Naive thymus-derived CD4-positive, alpha-beta T cell (primary cell): ENCODE measurements at regions of chr5 and their contacts with region 1.

Region 1: GRCh38 chr5:53031695-53032096 is 42.5 kb downstream of the ITGA2 start:
- DNase-seq: peak in 8 of 9 donors; percentile 25 to 68 (median 60)
- ATAC-seq: peak; percentile 89
- H3K4me3 ChIP-seq: no peak overlapping the region
- H3K4me3 Mint-ChIP-seq: peak overlapping the region in 8 of 10 donors; percentile 0 to 79 (median 60)
- H3K27ac ChIP-seq: peak overlapping the region; percentile 44
- H3K27ac Mint-ChIP-seq: peak overlapping the region; percentile 53 to 89 (median 81)
- H3K4me1 ChIP-seq: peaks cover 0 to 18% of the 10 kb centered on the region in 2 donors
- H3K4me1 Mint-ChIP-seq: peaks cover 12 to 55% (median 29%) of the 10 kb centered on the region in 7 donors
- H3K27me3 ChIP-seq: no peaks in the 10 kb centered on the region
- H3K27me3 Mint-ChIP-seq: no peaks in the 10 kb centered on the region

Region 2: DNA sequence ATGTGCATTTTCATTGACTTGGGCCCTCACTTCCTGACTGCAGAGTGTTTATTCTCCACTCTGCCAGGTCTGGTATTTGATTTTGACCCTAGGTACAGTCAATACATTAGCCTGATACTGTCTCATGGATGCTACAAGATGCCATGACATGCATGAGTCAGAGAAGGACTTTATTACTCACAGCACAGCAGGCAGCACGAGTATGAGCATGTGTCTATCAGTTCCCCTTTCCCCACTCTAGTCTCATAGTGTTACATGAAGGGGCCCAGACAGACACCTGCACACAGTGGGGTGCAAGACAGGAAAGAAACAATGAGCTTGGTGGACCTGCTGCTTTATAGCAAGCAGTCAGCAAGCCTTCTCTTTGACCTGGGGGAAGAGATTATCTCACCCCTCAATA is 22.9 kb before region 1 on chr5:
- CTCF ChIA-PET with region 1: no interaction called
- POLR2A ChIA-PET with region 1: no interaction called
- intact Hi-C with region 1: loop called in 1 of 2 experiments (anchors 1 kb)
- DNase-seq: peak in 1 of 9 donors; percentile 45
- ATAC-seq: peak; percentile 59
- H3K4me3 ChIP-seq: no peak overlapping the region
- H3K4me3 Mint-ChIP-seq: peak overlapping the region in 1 of 10 donors; percentile 21
- H3K27ac ChIP-seq: no peak overlapping the region
- H3K27ac Mint-ChIP-seq: peak overlapping the region in 2 of 9 donors; percentile 23 to 76
- H3K4me1 ChIP-seq: peaks cover 0 to 9% of the 10 kb centered on the region in 2 donors
- H3K4me1 Mint-ChIP-seq: peaks cover 0 to 78% (median 23%) of the 10 kb centered on the region in 7 donors
- H3K27me3 ChIP-seq: no peaks in the 10 kb centered on the region
- H3K27me3 Mint-ChIP-seq: peaks cover 0 to 3% (median 0%) of the 10 kb centered on the region in 5 donors

Region 3: GRCh38 chr5:53089345-53089991 is 57.8 kb after region 1 on chr5:
- CTCF ChIA-PET with region 1: no interaction called
- POLR2A ChIA-PET with region 1: no interaction called
- intact Hi-C with region 1: loop called in 1 of 2 experiments (anchors 5 kb)
- DNase-seq: peak in 6 of 9 donors; percentile 29 to 60 (median 40)
- ATAC-seq: peak; percentile 65
- H3K4me3 ChIP-seq: no peak overlapping the region
- H3K4me3 Mint-ChIP-seq: peak overlapping the region in 7 of 10 donors; percentile 32 to 71 (median 47)
- H3K27ac ChIP-seq: no peak overlapping the region
- H3K27ac Mint-ChIP-seq: peak overlapping the region in 5 of 9 donors; percentile 25 to 76 (median 40)
- H3K4me1 ChIP-seq: peaks cover 0 to 16% of the 10 kb centered on the region in 2 donors
- H3K4me1 Mint-ChIP-seq: peaks cover 11 to 61% (median 19%) of the 10 kb centered on the region in 7 donors
- H3K27me3 ChIP-seq: no peaks in the 10 kb centered on the region
- H3K27me3 Mint-ChIP-seq: peaks cover 0 to 2% (median 0%) of the 10 kb centered on the region in 5 donors

Region 4: GRCh38 chr5:53095931-53096525 is 64.3 kb after region 1 on chr5:
- CTCF ChIA-PET with region 1: no interaction called
- POLR2A ChIA-PET with region 1: no interaction called
- intact Hi-C with region 1: loop called in 1 of 2 experiments (anchors 5 kb)
- DNase-seq: peak; percentile 17 to 69 (median 59)
- ATAC-seq: peak; percentile 96
- H3K4me3 ChIP-seq: no peak overlapping the region
- H3K4me3 Mint-ChIP-seq: no peak overlapping the region
- H3K27ac ChIP-seq: no peak overlapping the region
- H3K27ac Mint-ChIP-seq: peak overlapping the region in 3 of 9 donors; percentile 41 to 64 (median 53)
- H3K4me1 ChIP-seq: no peaks in the 10 kb centered on the region
- H3K4me1 Mint-ChIP-seq: peaks cover 0 to 28% (median 3%) of the 10 kb centered on the region in 7 donors
- H3K27me3 ChIP-seq: no peaks in the 10 kb centered on the region
- H3K27me3 Mint-ChIP-seq: no peaks in the 10 kb centered on the region

Region 5: GRCh38 chr5:53792338-53792737 is 760.6 kb after region 1 on chr5:
- CTCF ChIA-PET with region 1: no interaction called
- POLR2A ChIA-PET with region 1: no interaction called
- intact Hi-C with region 1: no loop called
- DNase-seq: no peak
- ATAC-seq: no peak
- H3K4me3 ChIP-seq: no peak overlapping the region
- H3K4me3 Mint-ChIP-seq: no peak overlapping the region
- H3K27ac ChIP-seq: no peak overlapping the region
- H3K27ac Mint-ChIP-seq: no peak overlapping the region
- H3K4me1 ChIP-seq: no peaks in the 10 kb centered on the region
- H3K4me1 Mint-ChIP-seq: peaks cover 0 to 2% (median 0%) of the 10 kb centered on the region in 7 donors
- H3K27me3 ChIP-seq: no peaks in the 10 kb centered on the region
- H3K27me3 Mint-ChIP-seq: peaks cover 2 to 11% (median 6%) of the 10 kb centered on the region in 5 donors